Activated CD4-positive, alpha-beta T cell treated with anti-CD3 and anti-CD28 coated beads for 36 hours (primary cell): ENCODE measurements at regions of chr17 and their contacts with region 1.

Region 1: DNA sequence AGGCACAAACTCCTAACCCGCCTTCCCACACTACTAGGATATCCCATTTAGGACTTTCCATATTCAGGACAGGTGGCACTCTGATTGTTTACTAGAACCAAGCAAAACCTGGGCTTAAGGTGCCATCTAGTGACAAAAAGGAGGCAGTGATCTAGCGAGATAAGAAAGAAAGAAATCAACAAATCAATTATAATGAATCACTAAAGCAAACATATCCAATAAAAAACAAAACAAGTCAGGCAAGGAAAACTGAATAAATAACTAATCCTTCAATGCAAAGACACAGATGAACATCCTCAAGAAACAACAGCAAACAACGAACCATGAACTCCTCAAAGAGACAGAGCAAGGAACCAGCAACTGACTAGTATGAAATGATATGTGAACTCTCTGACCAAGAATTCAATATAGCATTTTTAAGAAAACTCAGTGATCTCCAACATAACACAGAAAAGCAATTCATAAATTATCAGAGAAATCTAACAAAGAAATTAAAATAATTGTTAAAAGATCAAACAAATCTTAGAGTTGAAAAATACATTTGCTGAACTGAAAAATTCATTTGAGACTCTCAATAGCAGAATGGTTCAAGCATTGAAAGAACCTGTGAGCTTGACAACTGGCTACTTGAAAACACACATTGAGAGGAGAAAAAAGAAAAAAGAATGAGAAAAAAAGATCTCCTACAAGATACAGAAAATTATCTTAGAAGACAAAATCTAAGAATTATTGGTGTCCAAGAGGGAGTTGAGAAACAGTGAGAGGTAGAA is 203.7 kb downstream of the CEP112 start:
- DNase-seq: peak; percentile 13
- ATAC-seq: no peak
- H3K4me3 Mint-ChIP-seq: no peak overlapping the region
- H3K27ac Mint-ChIP-seq: no peak overlapping the region
- H3K4me1 Mint-ChIP-seq: no peaks in the 10 kb centered on the region
- H3K27me3 Mint-ChIP-seq: no peaks in the 10 kb centered on the region

Region 2: DNA sequence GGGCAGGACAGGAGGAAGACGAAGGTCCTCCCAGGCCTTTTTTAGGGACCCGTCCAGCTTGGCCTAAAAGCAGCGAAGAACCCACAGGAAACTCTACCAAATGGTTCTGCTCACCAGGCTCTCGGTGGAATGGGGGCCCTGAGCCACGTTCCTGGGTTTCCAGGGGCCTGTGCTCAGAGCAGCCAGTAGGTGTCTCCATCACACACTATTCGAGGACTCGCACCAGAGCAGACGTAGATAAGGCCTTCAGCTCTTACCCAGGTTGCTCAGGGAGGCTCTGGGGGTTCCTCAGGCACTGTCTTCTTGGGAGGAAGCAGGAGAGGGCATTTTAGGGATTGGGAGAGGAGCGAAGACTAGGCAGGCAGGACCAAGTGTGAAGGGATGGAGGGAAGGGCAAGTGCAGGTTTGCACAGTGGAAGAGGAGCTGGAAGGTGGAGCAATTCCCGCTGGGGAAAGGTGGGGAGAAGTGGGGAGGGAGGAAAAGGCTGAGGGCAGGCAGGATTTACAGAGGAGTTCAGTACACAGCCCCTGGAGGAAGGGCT is 694.0 kb before region 1 on chr17:
- CTCF ChIA-PET with region 1: interaction called, 13 read pairs
- POLR2A ChIA-PET with region 1: no interaction called
- intact Hi-C with region 1: loop called (anchors 1 kb)
- DNase-seq: peak; percentile 76
- ATAC-seq: peak; percentile 95
- H3K4me3 Mint-ChIP-seq: no peak overlapping the region
- H3K27ac Mint-ChIP-seq: no peak overlapping the region
- H3K4me1 Mint-ChIP-seq: peaks cover 2% of the 10 kb centered on the region
- H3K27me3 Mint-ChIP-seq: no peaks in the 10 kb centered on the region

Region 3: GRCh38 chr17:65455972-65456343 is 532.3 kb before region 1 on chr17:
- CTCF ChIA-PET with region 1: no interaction called
- POLR2A ChIA-PET with region 1: no interaction called
- intact Hi-C with region 1: loop called in 1 of 2 experiments (anchors 10 kb)
- DNase-seq: peak; percentile 34
- ATAC-seq: peak; percentile 33
- H3K4me3 Mint-ChIP-seq: no peak overlapping the region
- H3K27ac Mint-ChIP-seq: no peak overlapping the region
- H3K4me1 Mint-ChIP-seq: peaks cover 6% of the 10 kb centered on the region
- H3K27me3 Mint-ChIP-seq: no peaks in the 10 kb centered on the region

Region 4: GRCh38 chr17:65888649-65889048 is 99.6 kb before region 1 on chr17:
- CTCF ChIA-PET with region 1: no interaction called
- POLR2A ChIA-PET with region 1: no interaction called
- intact Hi-C with region 1: no loop called
- DNase-seq: no peak
- ATAC-seq: no peak
- H3K4me3 Mint-ChIP-seq: no peak overlapping the region
- H3K27ac Mint-ChIP-seq: no peak overlapping the region
- H3K4me1 Mint-ChIP-seq: no peaks in the 10 kb centered on the region
- H3K27me3 Mint-ChIP-seq: no peaks in the 10 kb centered on the region

Region 5: GRCh38 chr17:65914784-65915350 is 73.4 kb before region 1 on chr17:
- CTCF ChIA-PET with region 1: no interaction called
- POLR2A ChIA-PET with region 1: no interaction called
- intact Hi-C with region 1: no loop called
- DNase-seq: peak; percentile 40
- ATAC-seq: peak; percentile 96
- H3K4me3 Mint-ChIP-seq: peak overlapping the region; percentile 2
- H3K27ac Mint-ChIP-seq: peak overlapping the region; percentile 93
- H3K4me1 Mint-ChIP-seq: peaks cover 17% of the 10 kb centered on the region
- H3K27me3 Mint-ChIP-seq: no peaks in the 10 kb centered on the region

Region 6: DNA sequence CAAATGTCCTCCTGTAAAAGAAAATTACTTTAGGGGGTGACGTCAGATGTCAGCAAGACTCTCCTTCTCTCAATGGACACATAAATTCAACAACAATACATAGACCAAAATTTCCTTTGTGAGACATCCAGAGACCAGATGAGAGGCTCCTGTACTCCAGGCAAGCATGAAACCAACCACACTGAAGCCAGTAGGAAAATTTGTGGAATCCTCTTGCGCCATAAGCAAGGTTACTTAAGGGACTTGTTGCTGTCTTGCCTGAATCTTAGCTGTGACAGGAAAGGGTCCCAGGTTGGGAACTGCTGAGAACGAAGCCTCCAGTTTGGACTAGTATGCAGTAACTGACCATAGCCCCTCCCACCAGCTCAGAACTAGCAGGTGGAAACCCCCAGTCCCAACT is 147.6 kb after region 1 on chr17:
- CTCF ChIA-PET with region 1: no interaction called
- POLR2A ChIA-PET with region 1: no interaction called
- intact Hi-C with region 1: no loop called
- DNase-seq: no peak
- ATAC-seq: no peak
- H3K4me3 Mint-ChIP-seq: no peak overlapping the region
- H3K27ac Mint-ChIP-seq: no peak overlapping the region
- H3K4me1 Mint-ChIP-seq: peaks cover 2% of the 10 kb centered on the region
- H3K27me3 Mint-ChIP-seq: no peaks in the 10 kb centered on the region